ENCODE measurements at regions of chr20 and their contacts with region 1.

Region 1: DNA sequence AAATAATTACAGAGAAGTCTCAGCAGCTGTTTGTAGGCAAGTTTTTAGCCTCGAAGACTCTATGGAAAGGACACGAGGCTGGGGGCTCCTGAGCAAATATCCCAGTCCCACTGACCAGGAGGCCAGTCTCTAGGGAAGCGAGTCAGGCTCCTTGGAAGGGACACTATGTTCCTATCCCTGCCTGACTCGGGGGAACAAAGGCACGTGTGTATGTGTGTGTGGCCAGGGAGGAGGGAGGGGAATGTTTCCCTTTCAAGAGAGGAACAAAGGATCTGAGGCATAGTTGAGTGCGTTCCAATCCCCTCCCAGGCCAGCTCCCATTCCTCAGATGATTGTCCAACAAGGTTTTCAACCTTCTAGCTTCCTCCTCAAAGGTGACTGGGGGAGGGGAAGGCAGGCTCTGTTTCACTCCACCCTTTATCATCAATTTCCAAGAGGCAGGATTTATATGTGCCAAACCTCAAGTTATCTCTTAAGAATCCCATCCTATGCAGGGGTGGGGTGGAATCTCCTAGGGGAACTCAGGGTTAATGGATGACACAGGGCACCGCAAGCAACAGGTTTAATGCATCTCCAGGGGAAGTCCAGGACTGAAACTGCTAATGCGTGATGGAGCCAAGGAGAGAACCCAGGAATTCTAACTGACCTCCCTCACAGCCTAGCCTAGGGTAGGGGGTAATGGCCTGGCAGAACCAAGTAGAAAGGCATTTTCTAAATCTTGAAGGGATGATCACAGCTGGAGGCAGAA is 9.9 kb downstream of the BCL2L1 start:
- DNase-seq: peak; percentile 80 to 94 (median 88)
- ATAC-seq: peak; percentile 90 to 94 (median 92)
- H3K4me3 ChIP-seq: peak overlapping the region in 10 of 12 donors; percentile 2 to 46 (median 34)
- H3K27ac ChIP-seq: peak overlapping the region; percentile 97 to 100 (median 98)
- H3K4me1 ChIP-seq: peaks cover 36 to 100% (median 92%) of the 10 kb centered on the region in 12 donors
- H3K27me3 ChIP-seq: no peaks in the 10 kb centered on the region
- CTCF ChIP-seq: no peak
- POLR2A ChIP-seq: no peak

Region 2: DNA sequence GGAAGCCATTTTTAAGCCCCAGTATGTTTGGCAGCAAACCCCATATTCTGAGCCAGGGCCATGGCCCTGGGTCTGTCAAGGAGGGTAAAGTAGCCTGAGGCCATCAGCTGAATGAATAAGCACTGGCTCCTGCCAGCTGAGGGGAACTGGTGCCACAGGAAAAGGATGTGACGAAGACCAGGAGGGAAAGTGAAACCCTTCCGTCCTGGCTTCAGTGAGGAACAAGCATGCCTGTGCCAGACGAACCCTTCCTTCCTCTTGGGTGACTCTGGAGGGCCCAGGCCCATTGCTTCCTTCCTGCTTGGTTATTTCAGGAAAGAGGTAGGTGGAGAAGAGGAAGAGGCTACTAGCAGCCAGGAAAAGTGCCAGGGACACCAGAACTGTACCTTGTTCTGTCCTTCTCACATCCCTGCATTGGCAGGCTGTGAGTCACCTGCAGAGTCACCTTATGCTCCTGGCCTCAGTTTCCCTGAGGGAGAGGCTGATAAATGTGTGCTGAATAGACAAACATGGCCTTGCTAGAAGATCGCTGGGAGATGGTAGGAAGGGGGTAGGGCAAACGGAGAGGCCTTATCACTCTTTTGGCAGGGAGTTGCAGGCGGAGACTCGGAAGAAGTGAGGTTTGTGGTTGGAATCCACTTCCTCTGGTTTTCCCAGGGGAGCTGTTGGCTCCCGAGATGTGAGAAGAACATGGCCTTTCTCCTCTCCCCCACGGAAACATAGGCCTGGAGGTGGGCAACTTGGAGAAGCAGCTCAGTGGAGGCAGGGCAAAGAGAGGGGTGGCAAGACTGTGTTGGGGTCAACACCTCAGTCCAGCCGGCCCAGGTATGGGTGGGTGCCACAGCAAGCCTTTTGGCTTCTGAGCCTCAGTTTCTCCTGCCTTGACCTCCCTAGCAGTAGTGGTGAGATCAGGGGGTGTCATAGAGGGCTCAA is 37.6 kb before region 1 on chr20:
- intact Hi-C with region 1: loop called in 4 of 10 experiments (anchors 2 to 5 kb)
- DNase-seq: peak; percentile 75 to 83 (median 79)
- ATAC-seq: peak; percentile 25 to 77 (median 70)
- H3K4me3 ChIP-seq: peak overlapping the region in 8 of 12 donors; percentile 1 to 52 (median 12)
- H3K27ac ChIP-seq: peak overlapping the region; percentile 10 to 96 (median 88)
- H3K4me1 ChIP-seq: peaks cover 48 to 100% (median 98%) of the 10 kb centered on the region in 12 donors
- H3K27me3 ChIP-seq: no peaks in the 10 kb centered on the region
- CTCF ChIP-seq: no peak
- POLR2A ChIP-seq: no peak

Measured in heart left ventricle (tissue), 16 donors.